Activated CD4-positive, alpha-beta memory T cell treated with anti-CD3 and anti-CD28 coated beads for 36 hours (primary cell): ENCODE measurements at regions of chr6 and their contacts with region 1.

Region 1: DNA sequence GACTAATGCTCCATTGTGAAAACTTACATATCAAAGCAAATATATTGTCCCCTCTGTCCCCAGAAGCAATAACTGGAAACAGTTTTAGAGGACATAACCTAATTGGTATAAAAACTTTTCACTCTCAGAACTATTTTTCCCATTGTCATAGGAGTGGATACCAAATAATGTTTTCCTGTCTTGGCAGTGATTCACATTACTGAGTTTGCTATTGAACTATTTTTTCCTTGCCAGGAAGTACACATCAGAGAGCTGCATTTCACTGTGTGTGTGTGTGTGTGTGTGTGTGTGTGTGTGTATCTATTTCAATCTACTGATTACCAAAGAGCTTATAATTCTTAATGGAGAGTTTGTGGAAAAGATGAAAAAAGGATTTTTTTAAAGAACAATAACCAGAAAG is 45.4 kb downstream of the AKAP12 start:
- DNase-seq: no peak
- H3K4me3 Mint-ChIP-seq: no peak overlapping the region
- H3K27ac Mint-ChIP-seq: peak overlapping the region; percentile 71
- H3K4me1 Mint-ChIP-seq: peaks cover 40% of the 10 kb centered on the region
- H3K27me3 Mint-ChIP-seq: peaks cover 20% of the 10 kb centered on the region

Region 2: DNA sequence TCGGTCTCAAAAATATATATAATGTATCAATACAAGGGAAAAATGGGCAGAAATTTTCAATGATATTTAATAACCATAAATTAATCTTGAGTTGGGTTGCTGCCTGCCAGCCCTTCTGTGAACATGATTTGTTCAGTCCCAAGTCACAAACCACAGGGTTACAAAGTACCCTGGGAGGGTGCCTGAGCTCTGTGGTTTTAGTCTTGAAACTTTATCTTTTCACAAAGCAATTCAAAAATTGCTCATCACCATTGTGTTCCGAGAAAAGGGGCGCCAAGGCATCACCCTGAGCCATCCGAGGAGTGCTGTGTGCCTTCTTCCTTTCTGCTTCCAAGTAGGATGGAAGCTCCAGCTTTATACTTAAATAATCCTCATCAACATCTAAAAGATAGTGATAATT is 187.0 kb before region 1 on chr6:
- CTCF ChIA-PET with region 1: no interaction called
- POLR2A ChIA-PET with region 1: no interaction called
- intact Hi-C with region 1: loop called (anchors 10 kb)
- DNase-seq: peak; percentile 60
- H3K4me3 Mint-ChIP-seq: no peak overlapping the region
- H3K27ac Mint-ChIP-seq: no peak overlapping the region
- H3K4me1 Mint-ChIP-seq: peaks cover 16% of the 10 kb centered on the region
- H3K27me3 Mint-ChIP-seq: no peaks in the 10 kb centered on the region

Region 3: DNA sequence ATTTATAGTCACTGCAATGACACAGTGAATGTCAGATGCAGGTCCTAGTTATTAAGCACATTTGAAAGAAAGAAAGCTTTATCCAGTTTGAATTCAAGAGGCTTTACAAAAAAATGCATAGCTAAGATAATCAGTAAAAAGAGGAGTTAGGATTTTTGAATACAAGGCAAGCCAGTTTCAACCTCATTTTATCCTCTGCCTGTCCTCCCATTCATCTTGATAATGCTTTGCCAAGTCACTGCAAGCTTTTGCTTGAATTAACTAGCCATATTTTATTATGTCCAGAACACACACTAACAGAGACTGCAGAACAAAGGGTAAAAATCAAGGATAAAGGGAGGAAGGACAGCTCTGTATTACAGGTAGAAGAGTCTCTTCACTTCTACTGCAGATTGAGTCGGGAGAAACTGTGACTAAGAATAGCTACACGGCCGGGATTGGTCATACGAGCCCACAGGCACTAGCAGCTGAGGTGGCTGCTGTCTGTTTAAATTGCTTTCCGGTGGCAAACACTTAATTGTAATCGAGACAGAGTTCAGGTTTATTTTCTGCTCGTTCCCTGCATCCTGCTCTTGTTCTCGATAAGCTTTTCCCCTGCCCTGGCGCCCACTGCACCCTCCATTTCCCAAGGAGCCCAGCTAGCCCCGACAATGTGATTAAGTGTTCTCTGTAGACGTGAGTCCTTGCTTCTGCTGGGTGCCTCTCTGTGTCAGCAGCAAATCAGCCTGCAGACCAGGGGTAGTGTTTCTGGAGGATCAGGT is 75.9 kb before region 1 on chr6:
- CTCF ChIA-PET with region 1: no interaction called
- POLR2A ChIA-PET with region 1: no interaction called
- intact Hi-C with region 1: no loop called
- DNase-seq: no peak
- H3K4me3 Mint-ChIP-seq: no peak overlapping the region
- H3K27ac Mint-ChIP-seq: no peak overlapping the region
- H3K4me1 Mint-ChIP-seq: no peaks in the 10 kb centered on the region
- H3K27me3 Mint-ChIP-seq: peaks cover 11% of the 10 kb centered on the region

Region 4: DNA sequence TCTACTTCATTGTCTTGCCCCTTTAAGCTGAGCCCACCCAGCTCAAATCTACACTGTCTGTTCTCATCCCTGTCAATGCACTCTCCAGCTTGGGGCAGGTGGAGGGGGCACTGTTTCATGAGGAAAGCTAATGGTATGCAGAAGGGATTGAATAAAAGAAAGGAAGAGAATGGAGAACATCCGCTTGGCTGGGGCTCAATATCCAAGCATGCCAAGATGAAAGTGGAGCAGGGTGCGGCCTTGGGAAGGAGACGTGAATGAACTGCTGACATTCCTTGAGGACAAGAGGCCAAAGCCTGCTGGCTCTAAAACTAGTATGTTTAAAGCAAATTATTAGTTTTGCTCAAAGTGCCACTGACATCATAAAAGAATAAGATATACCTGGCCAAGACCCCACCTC is 21.2 kb before region 1 on chr6:
- CTCF ChIA-PET with region 1: no interaction called
- POLR2A ChIA-PET with region 1: no interaction called
- intact Hi-C with region 1: no loop called
- DNase-seq: no peak
- H3K4me3 Mint-ChIP-seq: no peak overlapping the region
- H3K27ac Mint-ChIP-seq: no peak overlapping the region
- H3K4me1 Mint-ChIP-seq: no peaks in the 10 kb centered on the region
- H3K27me3 Mint-ChIP-seq: peaks cover 8% of the 10 kb centered on the region

Region 5: DNA sequence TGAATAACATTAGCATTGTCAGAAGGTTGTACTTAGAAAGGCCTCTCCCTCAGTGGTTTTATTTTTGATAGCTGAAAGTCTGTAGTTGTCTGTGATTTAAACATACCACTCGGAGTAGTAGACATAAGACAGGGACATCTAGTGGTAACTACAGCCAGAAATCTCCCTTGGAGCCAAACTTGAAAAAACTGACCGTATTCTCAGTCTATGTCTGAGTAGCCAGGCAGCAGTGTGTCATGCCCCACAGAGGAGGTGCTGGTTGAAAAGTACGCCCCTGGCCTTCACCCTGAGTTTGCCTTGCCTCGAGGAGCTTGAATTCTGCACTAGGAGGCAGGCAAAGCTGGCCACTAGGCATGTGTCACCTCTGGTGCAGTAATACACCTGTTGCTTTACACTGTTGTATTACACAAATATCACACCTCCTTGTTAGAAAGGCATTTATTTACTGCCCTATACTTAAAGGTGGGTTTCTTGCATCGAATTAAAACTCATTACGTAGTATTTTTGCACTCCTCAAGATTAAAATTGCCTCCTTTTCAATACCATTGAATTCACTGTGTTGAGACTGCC is 85.5 kb after region 1 on chr6:
- CTCF ChIA-PET with region 1: no interaction called
- POLR2A ChIA-PET with region 1: no interaction called
- intact Hi-C with region 1: loop called (anchors 5 kb)
- DNase-seq: no peak
- H3K4me3 Mint-ChIP-seq: no peak overlapping the region
- H3K27ac Mint-ChIP-seq: no peak overlapping the region
- H3K4me1 Mint-ChIP-seq: peaks cover 37% of the 10 kb centered on the region
- H3K27me3 Mint-ChIP-seq: no peaks in the 10 kb centered on the region

Region 6: GRCh38 chr6:151400454-151400853 is 115.3 kb after region 1 on chr6:
- CTCF ChIA-PET with region 1: no interaction called
- POLR2A ChIA-PET with region 1: no interaction called
- intact Hi-C with region 1: no loop called
- DNase-seq: no peak
- H3K4me3 Mint-ChIP-seq: no peak overlapping the region
- H3K27ac Mint-ChIP-seq: peak overlapping the region; percentile 38
- H3K4me1 Mint-ChIP-seq: peaks cover 58% of the 10 kb centered on the region
- H3K27me3 Mint-ChIP-seq: no peaks in the 10 kb centered on the region